ENCODE measurements at regions of chr6 and their contacts with region 1.

Region 1: GRCh38 chr6:142819603-142820337 is 125.2 kb downstream of the HIVEP2 start:
- DNase-seq: no peak
- ATAC-seq: peak; percentile 22 to 75 (median 38)
- H3K4me3 ChIP-seq: peak overlapping the region in 11 of 12 donors; percentile 6 to 56 (median 44)
- H3K27ac ChIP-seq: peak overlapping the region; percentile 38 to 86 (median 75)
- H3K4me1 ChIP-seq: peaks cover 4 to 73% (median 50%) of the 10 kb centered on the region in 12 donors
- H3K27me3 ChIP-seq: no peaks in the 10 kb centered on the region
- CTCF ChIP-seq: no peak
- POLR2A ChIP-seq: no peak

Region 2: GRCh38 chr6:142850679-142851423 is 31.1 kb after region 1 on chr6:
- intact Hi-C with region 1: loop called in 1 of 10 experiments (anchors 5 kb)
- DNase-seq: no peak
- ATAC-seq: no peak
- H3K4me3 ChIP-seq: no peak overlapping the region
- H3K27ac ChIP-seq: peak overlapping the region in 3 of 12 donors; percentile 3 to 20 (median 9)
- H3K4me1 ChIP-seq: peaks cover 3 to 99% (median 53%) of the 10 kb centered on the region in 12 donors
- H3K27me3 ChIP-seq: no peaks in the 10 kb centered on the region
- CTCF ChIP-seq: no peak
- POLR2A ChIP-seq: no peak